ENCODE measurements at regions of chr1 and their contacts with region 1.

Region 1: GRCh38 chr1:91803847-91804545 is 82.0 kb downstream of the TGFBR3 start:
- DNase-seq: peak; percentile 91
- H3K4me3 Mint-ChIP-seq: peak overlapping the region; percentile 78
- H3K27ac Mint-ChIP-seq: peak overlapping the region; percentile 95
- H3K4me1 Mint-ChIP-seq: peaks cover 45% of the 10 kb centered on the region
- H3K27me3 Mint-ChIP-seq: peaks cover 12% of the 10 kb centered on the region

Region 2: DNA sequence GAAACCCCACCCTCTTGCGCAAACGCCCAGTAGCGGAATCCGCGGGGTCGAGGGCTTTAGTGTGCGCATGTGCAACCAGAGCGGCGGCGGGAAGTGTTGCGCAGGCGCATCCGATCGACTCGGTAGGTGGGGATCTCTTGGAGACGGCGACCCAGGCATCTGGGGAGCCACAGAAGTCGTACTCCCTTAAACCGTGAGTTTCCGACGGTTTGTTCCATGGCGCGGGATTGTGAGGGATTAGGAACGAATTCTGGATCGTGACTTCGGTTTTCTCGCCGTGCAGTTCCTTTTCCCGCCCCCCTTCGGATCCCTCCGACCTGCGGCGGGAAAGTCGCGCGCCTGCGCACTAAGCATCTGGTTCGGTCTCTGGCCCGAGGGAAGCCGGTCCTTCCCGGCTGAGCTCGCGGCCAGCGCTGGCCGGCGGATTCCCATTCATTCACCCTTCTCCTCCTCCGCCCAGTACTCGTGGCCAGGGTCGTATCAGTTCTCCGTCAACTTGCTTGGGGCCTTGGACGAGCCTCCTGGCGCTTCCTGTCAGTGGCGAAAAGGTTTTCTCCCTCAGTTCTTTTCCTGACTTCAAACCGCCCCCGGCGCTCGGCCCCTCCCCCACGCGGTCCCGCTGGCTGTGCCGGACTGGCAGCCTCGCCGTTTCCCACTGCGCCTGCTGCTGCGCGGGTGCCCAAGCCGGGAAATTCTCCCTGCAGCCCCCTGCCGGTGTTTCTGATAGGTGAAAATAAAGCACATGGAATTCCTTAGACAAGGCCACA is 303.1 kb before region 1 on chr1 and contains the start of gene CDC7:
- intact Hi-C with region 1: loop called (anchors 5 kb)
- DNase-seq: peak; percentile 95
- H3K4me3 Mint-ChIP-seq: no peak within 1 kb of the TSS
- H3K27ac Mint-ChIP-seq: no peak within 1 kb of the TSS
- H3K4me1 Mint-ChIP-seq: peaks cover 28% of the 10 kb centered on the region
- H3K27me3 Mint-ChIP-seq: no peaks in the 10 kb centered on the region
- total RNA-seq, gene CDC7: 21.4 and 22.3 TPM in 2 replicates

Region 3: GRCh38 chr1:91591175-91591968 is 212.6 kb before region 1 on chr1:
- intact Hi-C with region 1: loop called (anchors 5 kb)
- DNase-seq: peak; percentile 66
- H3K4me3 Mint-ChIP-seq: peak overlapping the region; percentile 76
- H3K27ac Mint-ChIP-seq: peak overlapping the region; percentile 85
- H3K4me1 Mint-ChIP-seq: peaks cover 29% of the 10 kb centered on the region
- H3K27me3 Mint-ChIP-seq: peaks cover 2% of the 10 kb centered on the region

Region 4: GRCh38 chr1:91697416-91697815 is 106.6 kb before region 1 on chr1:
- intact Hi-C with region 1: loop called (anchors 5 kb)
- DNase-seq: peak; percentile 90
- H3K4me3 Mint-ChIP-seq: peak overlapping the region; percentile 74
- H3K27ac Mint-ChIP-seq: peak overlapping the region; percentile 76
- H3K4me1 Mint-ChIP-seq: peaks cover 30% of the 10 kb centered on the region
- H3K27me3 Mint-ChIP-seq: no peaks in the 10 kb centered on the region

Region 5: DNA sequence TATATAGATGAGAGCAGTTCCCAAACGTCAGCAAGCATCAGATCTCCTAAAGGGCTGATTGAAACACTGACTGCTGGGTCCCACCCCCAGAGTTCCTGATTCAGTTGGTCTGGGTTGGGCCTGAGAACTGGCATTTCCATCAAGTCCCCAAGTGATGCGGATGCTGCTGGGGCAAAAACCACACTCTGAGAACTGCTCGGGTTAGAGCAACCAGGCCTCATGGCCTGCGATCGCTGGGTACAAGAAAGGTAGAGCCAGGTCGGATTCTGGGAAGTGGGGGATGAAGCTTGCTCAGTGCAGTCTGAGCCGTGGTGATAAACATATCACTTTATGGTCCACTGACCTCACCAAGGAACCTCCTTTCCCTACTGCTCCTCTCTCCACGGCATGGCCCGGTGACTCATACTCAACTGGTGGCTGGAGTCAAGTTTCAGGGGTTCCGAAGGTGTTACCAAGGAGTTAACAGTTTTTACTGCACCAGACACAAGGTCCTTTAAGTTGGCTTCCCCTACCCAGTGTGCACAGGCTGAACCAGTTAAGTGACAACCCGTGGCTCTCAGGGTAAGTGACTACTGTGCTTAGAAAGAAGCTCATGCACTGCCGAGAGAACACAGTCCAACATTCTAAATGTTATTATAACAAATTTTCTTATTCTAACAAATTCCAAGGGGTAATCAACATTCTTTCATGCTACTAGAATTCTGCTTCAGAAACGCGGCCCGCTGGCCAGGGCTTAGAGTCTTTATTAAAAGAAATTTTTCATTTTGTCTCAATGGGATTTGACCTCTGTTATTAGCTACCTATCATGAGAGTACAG is 71.5 kb before region 1 on chr1:
- intact Hi-C with region 1: loop called (anchors 1 kb)
- DNase-seq: no peak
- H3K4me3 Mint-ChIP-seq: peak overlapping the region; percentile 17
- H3K27ac Mint-ChIP-seq: peak overlapping the region; percentile 69
- H3K4me1 Mint-ChIP-seq: peaks cover 45% of the 10 kb centered on the region
- H3K27me3 Mint-ChIP-seq: peaks cover 2% of the 10 kb centered on the region

Region 6: DNA sequence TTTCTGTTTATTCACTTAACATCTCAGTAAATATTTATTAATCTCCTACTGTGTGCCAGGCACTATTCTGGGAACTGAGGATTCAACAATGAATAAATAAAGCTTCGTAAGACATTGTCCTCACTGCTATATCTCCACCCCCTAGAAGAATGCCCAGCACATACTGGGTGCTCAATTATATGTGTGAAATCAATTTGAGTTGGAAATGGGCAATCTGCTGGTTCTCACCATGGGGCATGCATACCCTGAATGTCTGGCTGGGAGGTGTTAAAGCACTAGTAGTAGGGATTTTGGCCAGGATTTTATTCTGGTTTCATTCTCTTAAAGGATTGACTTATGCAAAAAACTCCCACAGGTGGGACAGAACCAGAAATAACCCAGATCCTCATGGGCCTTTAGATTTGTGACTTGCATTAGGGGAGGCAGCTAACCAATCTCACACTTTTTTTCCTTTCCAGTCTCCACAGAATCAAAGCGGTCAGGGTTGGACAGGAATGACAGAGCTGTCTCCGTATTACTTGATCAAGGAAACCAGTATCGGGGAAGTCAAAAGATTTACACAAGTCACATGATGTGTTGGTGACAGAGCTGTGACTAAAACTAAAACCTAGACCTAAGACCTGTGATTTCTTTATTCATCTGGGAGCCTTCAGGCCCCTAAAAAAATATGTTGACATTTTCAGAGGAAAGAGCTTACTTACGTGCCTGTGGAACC is 669.9 kb after region 1 on chr1:
- intact Hi-C with region 1: loop called (anchors 5 kb)
- DNase-seq: peak; percentile 80
- H3K4me3 Mint-ChIP-seq: peak overlapping the region; percentile 48
- H3K27ac Mint-ChIP-seq: peak overlapping the region; percentile 89
- H3K4me1 Mint-ChIP-seq: peaks cover 67% of the 10 kb centered on the region
- H3K27me3 Mint-ChIP-seq: no peaks in the 10 kb centered on the region